ENCODE measurements at regions of chr16 and their contacts with region 1.

Region 1: DNA sequence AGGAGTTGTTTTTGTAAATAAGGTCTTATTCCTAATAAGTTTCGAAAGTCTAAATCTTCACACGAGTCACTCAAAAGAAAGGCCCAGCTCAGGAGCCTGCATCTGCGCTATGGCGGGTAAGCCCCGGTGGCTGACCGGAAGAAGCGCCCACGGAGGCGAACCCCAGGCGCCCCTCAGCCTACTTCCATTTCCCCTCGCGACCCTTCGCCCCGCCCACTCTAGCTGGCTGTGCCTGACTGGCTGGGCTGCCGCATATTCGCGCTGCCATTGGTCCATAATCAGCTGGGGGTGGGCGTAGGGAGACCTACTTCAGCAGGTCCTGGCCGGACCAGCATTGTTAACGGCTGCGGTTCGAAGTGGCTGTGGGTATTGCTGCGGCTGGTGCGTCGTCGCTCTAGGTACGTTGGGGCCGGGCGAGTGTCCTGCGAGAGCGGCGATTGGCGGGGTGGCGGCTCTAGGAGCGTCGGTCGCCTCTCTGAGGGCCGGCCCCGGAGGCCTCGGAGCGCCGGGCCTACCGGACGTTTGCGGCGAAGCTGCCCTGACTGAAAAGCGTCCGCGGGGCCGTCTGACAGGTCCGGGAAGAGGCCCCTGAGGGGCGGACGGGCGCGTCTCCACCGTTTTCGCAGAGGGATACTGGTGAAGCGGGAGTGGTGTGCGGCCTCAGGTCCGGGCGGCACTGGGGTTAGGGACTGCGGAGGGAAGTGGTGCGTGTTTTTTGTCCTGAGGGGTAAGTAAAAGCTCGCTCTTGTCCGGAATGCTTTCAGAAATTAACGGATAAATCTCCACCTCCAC is at the start of gene ATF7IP2:
- DNase-seq: peak; percentile 95
- H3K4me3 ChIP-seq: peak within 1 kb of the TSS; percentile 72 to 94 (median 94)
- H3K27ac ChIP-seq: peak within 1 kb of the TSS; percentile 55
- H3K4me1 ChIP-seq: peaks cover 8% of the 10 kb centered on the region
- H3K27me3 ChIP-seq: no peaks in the 10 kb centered on the region
- CTCF ChIP-seq: no peak
- POLR2A ChIP-seq: peak; percentile 91
- total RNA-seq, gene ATF7IP2: 13.0 and 14.6 TPM in 2 replicates

Region 2: DNA sequence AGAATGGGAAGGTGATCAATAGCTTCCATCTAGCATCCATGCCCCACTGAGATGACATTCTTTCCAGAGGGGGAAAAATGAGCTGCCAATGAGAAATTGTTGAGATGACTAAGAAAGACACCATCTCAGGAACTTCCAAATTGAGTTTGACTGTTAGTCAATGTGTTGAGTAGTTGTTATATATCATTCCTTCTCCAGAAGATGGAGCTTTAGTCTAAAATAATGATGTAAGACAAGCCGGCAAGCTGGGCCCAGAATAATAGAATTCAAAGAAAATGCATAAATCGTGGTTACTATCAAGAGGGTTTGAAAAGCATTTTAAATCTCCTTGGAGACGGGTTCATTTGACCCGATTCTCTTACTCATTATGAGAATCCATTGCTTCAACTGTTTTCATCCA is 71.1 kb before region 1 on chr16:
- CTCF ChIA-PET with region 1: no interaction called
- POLR2A ChIA-PET with region 1: no interaction called
- dilution Hi-C with region 1: no loop called
- intact Hi-C with region 1: no loop called
- DNase-seq: no peak
- H3K4me3 ChIP-seq: no peak overlapping the region
- H3K27ac ChIP-seq: no peak overlapping the region
- H3K4me1 ChIP-seq: no peaks in the 10 kb centered on the region
- H3K27me3 ChIP-seq: no peaks in the 10 kb centered on the region
- CTCF ChIP-seq: no peak
- POLR2A ChIP-seq: no peak

Region 3: DNA sequence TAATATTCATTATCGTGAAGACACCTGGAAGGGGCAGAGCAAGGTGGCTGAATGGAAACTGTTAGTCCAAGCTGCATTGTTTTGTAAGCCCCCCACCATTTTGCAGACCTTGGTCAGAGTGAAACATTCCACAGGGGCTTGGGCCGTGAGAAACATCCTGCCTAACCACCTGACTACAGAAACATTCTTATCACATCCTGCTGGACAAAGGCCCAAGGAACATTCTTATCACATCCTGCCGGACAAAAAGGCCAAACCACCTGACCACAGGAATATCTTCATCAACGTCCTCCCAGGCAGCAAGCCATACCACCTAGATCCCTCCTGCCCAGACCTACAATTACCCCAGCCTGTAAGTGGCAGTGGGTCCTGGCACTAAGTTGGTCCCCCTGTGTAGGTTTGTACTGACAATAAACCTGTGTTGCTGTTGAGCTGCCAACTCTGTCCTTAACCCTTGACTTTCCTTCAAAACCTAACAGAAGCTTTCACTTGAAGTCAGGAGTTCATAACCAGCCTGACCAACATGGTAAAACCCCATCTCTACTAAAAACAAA is 19.5 kb after region 1 on chr16:
- CTCF ChIA-PET with region 1: interaction called, 3 read pairs
- POLR2A ChIA-PET with region 1: no interaction called
- dilution Hi-C with region 1: no loop called
- intact Hi-C with region 1: loop called (anchors 1 kb)
- DNase-seq: peak; percentile 92
- H3K4me3 ChIP-seq: no peak overlapping the region
- H3K27ac ChIP-seq: peak overlapping the region; percentile 36
- H3K4me1 ChIP-seq: peaks cover 11% of the 10 kb centered on the region
- H3K27me3 ChIP-seq: no peaks in the 10 kb centered on the region
- CTCF ChIP-seq: no peak
- POLR2A ChIP-seq: no peak

Region 4: GRCh38 chr16:10743610-10744393 is 357.9 kb after region 1 on chr16 and contains the start of gene NUBP1:
- CTCF ChIA-PET with region 1: no interaction called
- POLR2A ChIA-PET with region 1: no interaction called
- dilution Hi-C with region 1: no loop called
- intact Hi-C with region 1: loop called (anchors 5 kb)
- DNase-seq: peak; percentile 100
- H3K4me3 ChIP-seq: peak within 1 kb of the TSS; percentile 3 to 72 (median 56)
- H3K27ac ChIP-seq: peak within 1 kb of the TSS; percentile 80
- H3K4me1 ChIP-seq: peaks cover 7% of the 10 kb centered on the region
- H3K27me3 ChIP-seq: no peaks in the 10 kb centered on the region
- CTCF ChIP-seq: no peak
- POLR2A ChIP-seq: peak; percentile 86
- total RNA-seq, gene NUBP1: 23.6 and 28.7 TPM in 2 replicates

Region 5: GRCh38 chr16:10828851-10829731 is 443.2 kb after region 1 on chr16:
- CTCF ChIA-PET with region 1: no interaction called
- POLR2A ChIA-PET with region 1: no interaction called
- dilution Hi-C with region 1: no loop called
- intact Hi-C with region 1: loop called (anchors 5 kb)
- DNase-seq: peak; percentile 92
- H3K4me3 ChIP-seq: no peak overlapping the region
- H3K27ac ChIP-seq: no peak overlapping the region
- H3K4me1 ChIP-seq: peaks cover 12% of the 10 kb centered on the region
- H3K27me3 ChIP-seq: peaks cover 0 to 4% of the 10 kb centered on the region in 2 experiments
- CTCF ChIP-seq: no peak
- POLR2A ChIP-seq: no peak